Right ventricle myocardium inferior (tissue), 1 donor: ENCODE measurements at regions of chr4 and their contacts with region 1.

Region 1: DNA sequence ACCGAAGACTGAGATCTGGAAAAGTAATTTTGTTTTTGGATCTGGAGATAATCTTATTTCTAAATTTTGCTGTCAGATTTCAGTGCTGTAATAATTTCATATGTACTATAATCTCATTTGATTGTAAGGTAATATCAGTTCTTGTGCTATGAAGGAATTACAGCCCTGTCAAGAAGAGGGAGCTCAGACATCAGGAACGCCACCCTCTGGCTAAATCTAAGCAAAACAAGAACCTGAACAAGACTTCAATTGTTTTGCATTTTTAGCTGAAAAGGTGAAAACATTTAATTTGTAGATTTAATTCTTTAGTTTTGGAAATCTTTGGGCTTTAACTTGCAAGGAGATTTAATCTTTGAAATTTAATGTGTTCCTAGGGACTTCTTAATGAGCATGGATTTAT is 525.4 kb upstream of the HS3ST1 start:
- DNase-seq: no peak
- ATAC-seq: no peak

Region 2: GRCh38 chr4:11805842-11806241 is 148.3 kb before region 1 on chr4:
- intact Hi-C with region 1: loop called (anchors 10 kb)
- DNase-seq: no peak
- ATAC-seq: peak; percentile 70

Region 3: DNA sequence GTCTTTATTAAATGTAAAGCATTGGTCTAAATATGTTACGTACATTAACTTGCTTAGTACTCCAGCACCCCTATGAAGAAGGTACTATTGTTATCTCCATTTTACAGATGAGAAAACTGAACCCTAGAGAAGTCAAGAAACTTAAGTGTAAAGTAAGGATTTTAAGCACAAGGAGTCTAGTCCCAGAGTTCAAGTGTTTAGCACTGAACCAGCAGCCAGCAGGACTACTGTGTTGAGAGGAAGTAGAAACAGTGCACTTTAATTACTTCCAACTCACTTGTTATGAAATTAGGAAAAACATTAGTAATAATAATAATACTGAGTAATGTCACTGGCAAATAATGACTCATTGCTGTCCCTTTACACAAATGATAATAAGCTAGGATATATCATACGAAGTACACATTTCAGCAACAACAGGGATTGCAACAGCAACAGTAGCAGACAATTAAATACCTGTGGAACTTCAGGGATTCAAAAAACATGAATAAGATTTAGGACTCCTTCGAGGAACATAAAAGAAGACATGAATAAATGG is 22.7 kb after region 1 on chr4:
- intact Hi-C with region 1: no loop called
- DNase-seq: no peak
- ATAC-seq: no peak